Activated CD8-positive, alpha-beta memory T cell treated with anti-CD3 and anti-CD28 coated beads, Interleukin-2, amount 10 ng/mL, durations not matched to agents 7 days and 5 days (primary cell): ENCODE measurements at regions of chr5 and their contacts with region 1.

Region 1: DNA sequence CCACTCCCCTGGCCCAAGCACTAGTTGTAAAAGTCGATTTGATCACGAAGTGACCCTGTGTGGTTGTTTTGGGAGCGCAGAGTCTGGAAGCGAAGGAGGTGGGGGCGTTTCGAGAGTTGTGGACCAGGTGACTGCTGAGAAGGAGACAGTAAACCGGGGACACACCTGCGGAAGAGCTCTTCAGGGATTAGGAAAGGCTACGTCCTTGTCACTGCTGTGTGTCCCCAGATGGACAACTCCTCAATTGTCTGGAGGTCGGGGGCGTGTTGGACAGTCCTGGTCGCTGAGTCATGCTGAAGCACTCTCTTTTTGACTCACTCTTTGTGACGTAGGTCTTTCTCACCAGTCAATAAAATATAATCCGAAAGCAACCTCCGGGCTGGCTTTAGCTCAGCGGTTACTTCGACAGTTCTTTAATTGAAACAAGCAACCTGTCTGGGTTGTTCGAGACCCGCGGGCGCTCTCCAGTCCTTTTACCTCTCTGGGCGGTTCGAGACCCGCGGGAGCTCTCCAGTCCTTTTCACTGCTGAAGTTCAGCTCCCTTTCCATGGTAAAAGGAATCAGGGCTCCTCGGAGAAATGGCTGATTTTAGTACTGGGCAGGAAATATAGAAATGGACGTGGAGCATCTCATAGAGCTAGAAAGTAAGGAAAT is 10.8 kb downstream of the ZMAT2 start:
- DNase-seq: peak; percentile 94
- ATAC-seq: peak; percentile 94
- H3K4me3 Mint-ChIP-seq: peak overlapping the region; percentile 90
- H3K27ac Mint-ChIP-seq: peak overlapping the region; percentile 93
- H3K4me1 Mint-ChIP-seq: peaks cover 17% of the 10 kb centered on the region
- H3K27me3 Mint-ChIP-seq: no peaks in the 10 kb centered on the region

Region 2: DNA sequence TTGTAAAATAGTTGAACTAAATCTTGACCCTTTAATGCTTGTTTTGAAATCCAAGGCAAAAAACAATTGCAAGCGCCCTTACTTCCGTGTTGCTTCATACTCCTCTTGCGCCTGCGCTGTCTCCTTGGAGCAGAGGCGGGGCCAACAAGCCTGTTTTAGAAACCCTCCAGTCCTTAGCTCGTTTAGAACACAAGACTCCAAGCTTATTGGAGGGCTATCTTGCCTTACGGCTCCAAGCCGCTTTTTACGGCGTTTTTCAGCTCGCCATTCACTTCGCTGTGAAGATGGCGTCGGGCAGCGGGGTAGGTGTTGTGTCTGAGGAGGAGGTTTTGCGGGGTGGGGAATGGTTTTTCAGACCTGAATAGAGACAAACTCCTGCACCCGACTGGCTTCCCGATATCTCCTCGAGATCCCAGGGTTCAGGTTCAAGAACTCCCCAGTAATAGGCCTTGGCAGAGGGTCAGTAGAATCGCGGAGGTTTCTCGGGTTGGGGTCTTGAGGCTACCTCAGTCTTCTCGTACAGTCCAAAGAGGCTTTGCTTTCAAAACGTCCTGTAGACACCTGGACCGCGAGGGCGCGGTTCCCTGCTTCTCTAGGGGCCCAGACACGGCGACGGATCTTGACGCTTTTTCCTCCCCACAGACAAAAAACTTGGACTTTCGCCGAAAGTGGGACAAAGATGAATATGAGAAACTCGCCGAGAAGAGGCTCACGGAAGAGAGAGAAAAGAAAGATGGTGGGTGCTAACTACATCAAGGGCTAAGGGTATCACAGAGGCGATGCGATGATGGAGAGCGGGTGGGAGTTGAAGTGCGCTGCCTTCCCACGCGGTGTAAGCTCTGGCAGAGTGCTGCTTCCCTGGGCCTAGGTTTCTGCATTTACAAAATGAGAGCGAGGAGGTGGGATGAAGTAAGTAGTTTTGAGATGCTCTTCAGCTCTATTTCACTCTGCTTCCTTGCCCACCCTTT is 10.6 kb before region 1 on chr5 and contains the start of gene ZMAT2:
- CTCF ChIA-PET with region 1: interaction called, 16 read pairs
- DNase-seq: peak; percentile 98
- ATAC-seq: peak; percentile 100
- H3K4me3 Mint-ChIP-seq: peak within 1 kb of the TSS; percentile 98
- H3K27ac Mint-ChIP-seq: peak within 1 kb of the TSS; percentile 86
- H3K4me1 Mint-ChIP-seq: peaks cover 23% of the 10 kb centered on the region
- H3K27me3 Mint-ChIP-seq: no peaks in the 10 kb centered on the region
- total RNA-seq, gene ZMAT2: 45.0 to 58.6 TPM

Region 3: GRCh38 chr5:140725799-140726471 is 14.9 kb after region 1 on chr5:
- CTCF ChIA-PET with region 1: interaction called, 27 read pairs
- DNase-seq: peak; percentile 90
- ATAC-seq: peak; percentile 95
- H3K4me3 Mint-ChIP-seq: peak overlapping the region; percentile 76
- H3K27ac Mint-ChIP-seq: peak overlapping the region; percentile 56
- H3K4me1 Mint-ChIP-seq: peaks cover 15% of the 10 kb centered on the region
- H3K27me3 Mint-ChIP-seq: peaks cover 16% of the 10 kb centered on the region

Region 4: DNA sequence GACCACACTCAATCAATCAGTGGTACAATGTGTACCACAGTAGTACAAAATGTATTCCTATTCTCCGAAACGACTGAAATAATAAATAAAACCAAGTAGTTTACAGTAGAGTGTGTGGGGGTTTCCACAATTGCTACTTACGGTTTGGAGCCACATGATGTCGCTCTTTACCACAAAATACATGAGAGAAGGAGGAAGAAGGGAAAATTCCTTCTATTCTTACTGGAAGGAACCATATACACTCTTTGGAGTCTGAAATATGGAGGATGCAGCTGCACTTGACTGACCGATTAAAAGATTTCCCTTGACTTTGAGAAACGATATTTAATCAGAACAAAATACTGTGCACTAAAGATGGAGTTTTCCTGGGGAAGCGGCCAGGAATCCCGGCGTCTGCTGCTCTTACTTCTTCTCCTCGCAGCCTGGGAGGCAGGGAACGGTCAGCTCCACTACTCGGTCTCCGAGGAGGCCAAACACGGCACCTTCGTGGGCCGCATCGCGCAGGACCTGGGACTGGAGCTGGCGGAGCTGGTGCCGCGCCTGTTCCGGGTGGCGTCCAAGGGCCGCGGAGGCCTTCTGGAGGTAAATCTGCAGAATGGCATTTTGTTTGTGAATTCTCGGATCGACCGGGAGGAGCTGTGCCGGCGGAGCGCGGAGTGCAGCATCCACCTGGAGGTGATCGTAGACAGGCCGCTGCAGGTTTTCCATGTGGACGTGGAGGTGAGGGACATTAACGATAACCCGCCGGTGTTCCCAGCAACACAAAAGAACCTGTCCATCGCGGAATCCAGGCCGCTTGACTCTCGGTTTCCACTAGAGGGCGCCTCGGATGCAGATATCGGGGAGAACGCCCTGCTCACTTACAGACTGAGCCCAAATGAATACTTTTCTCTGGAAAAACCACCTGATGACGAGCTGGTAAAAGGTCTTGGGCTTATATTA is 96.1 kb after region 1 on chr5 and contains the start of gene PCDHA4:
- CTCF ChIA-PET with region 1: no interaction called
- DNase-seq: no peak
- ATAC-seq: no peak
- H3K4me3 Mint-ChIP-seq: no peak within 1 kb of the TSS
- H3K27ac Mint-ChIP-seq: no peak within 1 kb of the TSS
- H3K4me1 Mint-ChIP-seq: no peaks in the 10 kb centered on the region
- H3K27me3 Mint-ChIP-seq: no peaks in the 10 kb centered on the region
- total RNA-seq, gene PCDHA4: not detected